Left lung (tissue), 14 donors: ENCODE measurements at regions of chr16 and their contacts with region 1.

Region 1: DNA sequence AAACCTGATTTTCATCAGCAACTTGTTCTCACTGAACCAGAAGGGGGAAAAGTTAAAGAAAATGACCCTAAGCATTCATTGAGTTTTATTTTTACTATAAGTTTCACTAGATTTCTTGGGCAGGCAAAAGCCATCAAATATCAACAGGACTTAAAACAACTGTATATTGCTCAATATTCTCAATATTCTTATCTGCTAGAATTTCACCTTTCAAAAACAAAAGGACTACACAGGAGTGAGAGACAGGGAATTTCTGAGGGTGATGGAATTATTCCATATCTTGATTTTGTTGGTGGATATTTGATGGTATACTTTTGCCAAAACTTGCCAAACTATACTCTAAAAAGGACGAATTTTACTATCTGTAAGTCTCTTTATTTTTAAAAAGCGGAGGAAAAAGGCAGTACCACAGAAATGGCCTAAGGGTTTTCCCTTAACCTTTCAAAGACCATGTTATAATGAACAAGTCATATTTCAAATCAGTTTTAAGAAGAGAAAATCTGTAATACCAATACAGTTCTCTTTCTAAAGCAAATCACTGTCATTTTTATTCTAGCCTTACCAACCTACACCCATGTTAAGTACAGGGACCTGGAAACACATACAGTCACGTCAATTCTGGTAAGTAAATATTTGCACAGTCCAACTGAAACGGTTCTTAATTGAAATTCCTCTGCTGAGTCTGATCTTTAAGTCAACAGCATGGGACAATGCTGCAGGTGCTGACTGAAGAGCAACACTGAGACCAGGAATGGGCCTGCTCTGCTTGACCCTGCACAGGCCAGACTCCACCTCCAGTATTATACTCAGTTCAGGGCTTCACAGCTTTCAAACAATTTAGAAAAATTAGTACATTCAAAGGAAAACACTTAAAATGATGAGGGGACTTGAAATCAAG is 20.4 kb downstream of the MBTPS1 start:
- DNase-seq: peak in 3 of 4 donors; percentile 15 to 64 (median 53)
- ATAC-seq: peak; percentile 91
- H3K4me3 ChIP-seq: no peak overlapping the region
- H3K27ac ChIP-seq: peak overlapping the region in 1 of 2 donors; percentile 67
- H3K4me1 ChIP-seq: peaks cover 0 to 42% of the 10 kb centered on the region in 2 donors
- H3K27me3 ChIP-seq: no peaks in the 10 kb centered on the region
- CTCF ChIP-seq: no peak

Region 2: DNA sequence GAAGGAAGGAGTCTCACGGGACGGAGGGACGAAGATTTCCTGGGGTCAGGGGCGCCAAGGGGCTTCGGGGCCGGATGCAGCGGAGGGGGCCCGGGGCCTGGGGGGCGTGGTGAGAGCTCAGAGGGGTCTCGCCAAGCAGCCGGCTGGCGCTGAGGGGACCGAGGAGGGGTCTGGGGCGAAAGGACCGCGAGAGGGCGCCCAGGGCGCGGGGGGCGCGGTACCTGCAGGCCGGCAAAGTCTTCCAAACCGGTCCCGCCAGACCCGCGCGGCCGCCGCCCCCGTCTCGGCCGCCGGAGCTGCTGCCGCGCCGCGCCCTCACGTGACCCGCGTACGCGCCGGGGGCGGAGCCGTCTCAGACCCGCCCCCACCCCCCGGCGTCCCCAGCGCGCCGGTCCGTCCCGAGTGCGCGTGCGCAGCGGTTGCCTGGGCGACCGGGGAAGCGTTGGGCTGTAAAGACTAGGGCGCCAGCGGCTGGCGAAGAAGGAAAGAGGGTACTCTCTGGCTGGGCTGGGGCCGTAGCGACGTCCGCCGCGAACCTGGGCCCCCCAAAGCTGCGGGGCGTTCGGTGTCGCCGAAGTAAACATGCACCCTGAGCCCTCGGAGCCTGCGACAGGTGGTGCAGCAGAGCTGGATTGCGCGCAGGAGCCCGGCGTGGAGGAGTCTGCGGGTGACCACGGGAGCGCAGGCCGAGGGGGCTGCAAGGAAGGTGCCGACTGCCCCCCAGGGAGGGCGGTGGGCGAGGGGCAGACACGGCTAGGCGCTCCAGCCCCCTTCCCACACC is 48.7 kb after region 1 on chr16 and contains the starts of genes DNAAF1 and HSDL1:
- intact Hi-C with region 1: no loop called
- DNase-seq: peak; percentile 91 to 98 (median 94)
- ATAC-seq: peak; percentile 97
- H3K4me3 ChIP-seq: peak within 1 kb of the TSS; percentile 78 to 81
- H3K27ac ChIP-seq: peak within 1 kb of the TSS; percentile 69 to 83
- H3K4me1 ChIP-seq: peaks cover 5 to 20% of the 10 kb centered on the region in 2 donors
- H3K27me3 ChIP-seq: peaks cover 0 to 20% of the 10 kb centered on the region in 2 donors
- CTCF ChIP-seq: no peak
- polyA plus RNA-seq, gene DNAAF1: 4.1 to 22.3 (median 13.5) TPM
- polyA plus RNA-seq, gene HSDL1: 38.0 to 45.9 (median 42.6) TPM

Region 3: DNA sequence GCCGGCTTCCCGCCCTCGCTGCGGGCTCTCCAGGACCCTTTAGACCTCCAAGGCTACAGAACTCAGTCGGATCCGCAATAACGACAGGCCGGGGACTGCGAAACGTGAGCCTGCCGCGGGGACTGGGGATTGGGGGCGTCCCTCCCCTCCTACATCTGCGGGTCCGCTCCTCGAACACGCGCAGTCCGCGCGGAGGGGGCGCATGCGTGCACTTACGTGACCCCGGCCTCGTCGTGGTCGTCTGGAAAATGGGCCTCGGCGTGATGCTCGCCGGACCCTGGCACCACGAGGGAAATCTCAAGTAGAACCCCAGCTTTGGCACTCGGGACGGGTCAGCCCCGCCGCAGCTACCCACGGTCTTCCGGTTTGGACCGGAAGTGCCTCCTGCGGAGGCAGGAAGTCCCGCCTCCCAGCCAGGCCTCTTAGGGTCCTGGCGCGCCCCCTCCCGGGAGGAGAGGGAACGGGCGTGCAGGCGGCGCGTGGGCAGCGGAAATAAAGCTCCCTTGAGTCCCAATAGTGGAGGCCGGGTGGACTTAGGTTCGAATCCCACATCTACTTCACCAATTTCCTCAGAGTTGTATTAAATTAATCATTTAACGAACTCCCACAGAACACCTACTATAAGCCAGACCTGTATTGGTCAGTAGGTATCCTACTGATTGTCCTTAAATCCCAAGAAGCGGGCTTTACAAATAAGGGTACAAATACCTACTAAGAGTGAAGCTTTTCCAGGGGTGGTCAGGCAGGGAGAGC is 90.5 kb after region 1 on chr16 and contains the start of gene TAF1C:
- intact Hi-C with region 1: loop called in 1 of 2 experiments (anchors 10 kb)
- DNase-seq: peak; percentile 89 to 98 (median 94)
- ATAC-seq: peak; percentile 99
- H3K4me3 ChIP-seq: peak within 1 kb of the TSS; percentile 92 to 94
- H3K27ac ChIP-seq: peak within 1 kb of the TSS; percentile 69 to 78
- H3K4me1 ChIP-seq: peaks cover 6 to 30% of the 10 kb centered on the region in 2 donors
- H3K27me3 ChIP-seq: no peaks in the 10 kb centered on the region
- CTCF ChIP-seq: peak; percentile 94 to 97
- polyA plus RNA-seq, gene TAF1C: 37.5 to 66.1 (median 56.1) TPM